IMR-90 (cell line): ENCODE measurements at regions of chrX and their contacts with region 1.

Region 1: DNA sequence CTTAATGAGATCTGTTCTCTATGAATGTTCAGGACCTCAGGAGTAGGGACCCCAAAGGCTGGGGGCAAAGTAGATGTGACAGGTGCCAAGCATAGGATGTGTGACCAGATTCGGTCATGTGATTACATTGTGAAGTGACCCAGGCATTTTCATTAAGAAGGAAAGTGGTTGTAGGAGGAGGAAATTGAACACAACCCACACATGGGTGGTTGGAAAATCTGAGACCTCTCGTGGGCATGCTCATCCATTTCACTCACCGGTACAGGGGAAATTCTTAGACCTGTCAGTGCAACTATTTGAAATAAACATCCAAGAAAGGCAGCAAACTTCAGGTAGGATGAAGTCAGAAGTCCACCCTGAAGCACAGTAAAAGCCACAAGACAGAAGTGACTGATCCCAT is 43.5 kb upstream of the CD99 start:
- DNase-seq: no peak
- ATAC-seq: no peak
- H3K4me3 ChIP-seq: no peak overlapping the region
- H3K27ac ChIP-seq: no peak overlapping the region
- H3K4me1 ChIP-seq: no peaks in the 10 kb centered on the region
- H3K27me3 ChIP-seq: no peaks in the 10 kb centered on the region
- CTCF ChIP-seq: no peak
- POLR2A ChIP-seq: no peak
- RAD21 ChIP-seq: no peak

Region 2: DNA sequence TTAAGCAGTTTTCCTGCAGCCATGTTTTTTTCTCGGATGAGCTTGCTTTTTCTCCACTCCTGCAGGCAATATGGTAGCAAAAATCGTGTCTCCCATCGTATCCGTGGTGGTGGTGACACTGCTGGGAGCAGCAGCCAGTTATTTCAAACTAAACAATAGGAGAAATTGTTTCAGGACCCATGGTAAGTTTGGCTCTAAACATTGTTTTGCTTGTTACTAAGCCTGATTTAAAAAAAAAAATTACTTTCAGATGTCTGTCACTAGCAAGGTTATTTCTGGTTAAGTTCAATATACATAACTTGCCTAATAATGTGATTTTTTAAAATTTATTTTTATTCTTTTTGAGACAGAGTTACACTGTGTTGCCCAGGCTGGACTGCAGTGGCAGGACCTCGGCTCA is 163.6 kb after region 1 on chrX:
- CTCF ChIA-PET with region 1: no interaction called
- POLR2A ChIA-PET with region 1: no interaction called
- dilution Hi-C with region 1: no loop called
- in situ Hi-C with region 1: no loop called
- intact Hi-C with region 1: loop called (anchors 1 kb)
- DNase-seq: no peak
- ATAC-seq: no peak
- H3K4me3 ChIP-seq: no peak overlapping the region
- H3K27ac ChIP-seq: no peak overlapping the region
- H3K4me1 ChIP-seq: no peaks in the 10 kb centered on the region
- H3K27me3 ChIP-seq: no peaks in the 10 kb centered on the region; the same call in 1 of the 2 replicates
- CTCF ChIP-seq: no peak
- POLR2A ChIP-seq: no peak
- RAD21 ChIP-seq: no peak

Region 3: DNA sequence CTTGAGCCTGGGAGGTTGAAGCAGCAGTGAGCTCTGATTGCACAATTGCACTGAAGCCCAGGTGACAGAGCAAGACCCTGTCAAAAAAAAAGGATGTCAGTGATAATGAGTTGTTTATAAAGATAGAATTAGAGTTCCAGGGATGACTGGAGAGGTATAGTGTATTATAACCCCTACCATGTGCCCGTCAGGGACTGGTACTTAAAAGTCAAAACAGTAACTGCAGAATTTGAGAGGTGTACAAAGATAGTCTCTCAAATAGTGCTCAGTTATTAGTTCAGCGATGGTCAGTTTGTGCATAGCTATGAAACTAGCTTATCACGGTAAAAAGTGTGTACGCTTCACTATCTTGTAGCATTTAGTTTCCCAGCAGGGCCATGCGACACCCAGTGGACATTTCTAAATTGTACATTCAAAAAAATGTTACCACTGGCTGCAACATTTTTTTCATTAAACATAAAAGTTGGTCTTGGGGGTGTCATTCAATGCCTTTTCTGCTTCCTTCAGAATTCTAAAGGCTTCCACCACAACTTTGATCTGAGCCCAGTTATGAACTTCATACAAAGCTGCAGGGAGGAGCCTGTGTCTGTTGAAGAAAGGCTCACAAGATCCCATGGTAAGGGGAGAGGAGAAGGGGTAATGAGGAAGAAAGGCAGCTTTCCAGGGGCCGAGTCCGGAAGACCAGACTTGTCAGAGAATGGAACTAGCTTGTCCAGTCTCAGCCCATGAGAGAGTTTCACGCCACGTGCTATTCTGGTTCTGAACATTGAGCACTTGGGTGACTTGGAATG is 171.9 kb after region 1 on chrX:
- CTCF ChIA-PET with region 1: no interaction called
- POLR2A ChIA-PET with region 1: no interaction called
- dilution Hi-C with region 1: no loop called
- in situ Hi-C with region 1: loop called (anchors 5 kb)
- intact Hi-C with region 1: loop called (anchors 1 kb)
- DNase-seq: peak; percentile 39
- ATAC-seq: peak; percentile 78
- H3K4me3 ChIP-seq: no peak overlapping the region
- H3K27ac ChIP-seq: no peak overlapping the region
- H3K4me1 ChIP-seq: no peaks in the 10 kb centered on the region
- H3K27me3 ChIP-seq: peaks cover 4% of the 10 kb centered on the region; the same call in 1 of the 2 replicates
- CTCF ChIP-seq: peak; percentile 62
- POLR2A ChIP-seq: no peak
- RAD21 ChIP-seq: peak; percentile 70